Activated CD4-positive, alpha-beta T cell treated with anti-CD3 and anti-CD28 coated beads, Interleukin-2, amount 10 ng/mL, durations not matched to agents 7 days and 5 days (primary cell): ENCODE measurements at regions of chr3 and their contacts with region 1.

Region 1: GRCh38 chr3:69306239-69307185 is 79.4 kb downstream of the FRMD4B start:
- DNase-seq: peak; percentile 79
- H3K4me3 Mint-ChIP-seq: no peak overlapping the region
- H3K27ac Mint-ChIP-seq: peak overlapping the region; percentile 47
- H3K4me1 Mint-ChIP-seq: peaks cover 6% of the 10 kb centered on the region
- H3K27me3 Mint-ChIP-seq: no peaks in the 10 kb centered on the region

Region 2: DNA sequence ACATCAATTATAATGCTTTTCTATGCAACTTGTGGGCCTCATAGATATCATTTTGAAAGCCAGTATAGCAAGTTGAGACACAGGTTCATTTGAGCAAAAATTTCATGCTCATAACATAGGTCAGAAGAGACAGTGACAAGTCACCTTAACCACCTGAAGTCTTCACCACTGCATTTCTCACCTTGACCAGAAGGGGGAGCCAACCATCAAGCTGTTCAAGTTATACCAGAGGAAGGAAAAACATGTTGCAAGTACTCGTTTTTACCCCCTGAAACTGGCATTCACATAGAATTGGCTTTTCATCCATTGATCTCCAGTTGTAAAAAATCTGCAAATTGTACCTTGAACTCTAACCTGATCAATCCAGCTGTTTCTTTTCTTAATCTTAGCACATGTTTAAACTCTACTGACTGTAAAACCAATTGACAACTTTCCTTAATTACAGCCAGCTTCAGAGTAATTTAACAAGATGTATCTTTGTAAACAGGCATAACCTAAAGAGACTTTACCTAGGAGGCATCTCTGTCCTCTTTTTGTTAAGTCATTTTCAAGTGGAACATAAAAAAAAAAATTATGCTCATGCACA is 185.5 kb before region 1 on chr3:
- CTCF ChIA-PET with region 1: interaction called, 11 read pairs
- POLR2A ChIA-PET with region 1: no interaction called
- DNase-seq: peak; percentile 87
- H3K4me3 Mint-ChIP-seq: no peak overlapping the region
- H3K27ac Mint-ChIP-seq: no peak overlapping the region
- H3K4me1 Mint-ChIP-seq: peaks cover 5% of the 10 kb centered on the region
- H3K27me3 Mint-ChIP-seq: no peaks in the 10 kb centered on the region

Region 3: GRCh38 chr3:69161587-69162307 is 144.8 kb before region 1 on chr3:
- CTCF ChIA-PET with region 1: interaction called, 88 read pairs
- POLR2A ChIA-PET with region 1: interaction called, 4 read pairs
- DNase-seq: peak; percentile 50
- H3K4me3 Mint-ChIP-seq: no peak overlapping the region
- H3K27ac Mint-ChIP-seq: no peak overlapping the region
- H3K4me1 Mint-ChIP-seq: peaks cover 7% of the 10 kb centered on the region
- H3K27me3 Mint-ChIP-seq: no peaks in the 10 kb centered on the region

Region 4: GRCh38 chr3:69236812-69237707 is 69.5 kb before region 1 on chr3:
- CTCF ChIA-PET with region 1: interaction called, 12 read pairs
- POLR2A ChIA-PET with region 1: no interaction called
- DNase-seq: no peak
- H3K4me3 Mint-ChIP-seq: peak overlapping the region; percentile 12
- H3K27ac Mint-ChIP-seq: no peak overlapping the region
- H3K4me1 Mint-ChIP-seq: peaks cover 16% of the 10 kb centered on the region
- H3K27me3 Mint-ChIP-seq: no peaks in the 10 kb centered on the region

Region 5: GRCh38 chr3:69294014-69294775 is 12.3 kb before region 1 on chr3:
- CTCF ChIA-PET with region 1: interaction called, 18 read pairs
- POLR2A ChIA-PET with region 1: no interaction called
- DNase-seq: no peak
- H3K4me3 Mint-ChIP-seq: no peak overlapping the region
- H3K27ac Mint-ChIP-seq: no peak overlapping the region
- H3K4me1 Mint-ChIP-seq: peaks cover 1% of the 10 kb centered on the region
- H3K27me3 Mint-ChIP-seq: no peaks in the 10 kb centered on the region

Region 6: DNA sequence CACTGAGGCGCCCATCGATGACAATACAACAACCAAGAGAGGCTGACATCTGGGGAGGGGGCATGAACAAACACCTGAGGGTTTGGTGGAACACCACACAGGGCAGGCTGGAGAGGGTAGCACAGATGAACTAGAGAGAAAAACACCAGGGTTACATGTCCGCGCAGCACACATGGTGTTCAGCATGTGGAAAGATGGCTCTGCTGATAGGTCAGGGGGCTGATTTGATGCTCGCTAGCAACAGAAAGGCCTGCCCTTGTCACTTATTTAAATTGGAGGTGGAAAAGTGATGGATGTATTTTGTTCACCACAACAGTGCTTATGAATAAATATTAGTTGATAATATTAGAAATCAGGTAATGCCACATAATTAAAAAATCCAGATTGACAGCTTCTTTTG is 11.9 kb after region 1 on chr3:
- CTCF ChIA-PET with region 1: interaction called, 21 read pairs
- POLR2A ChIA-PET with region 1: no interaction called
- DNase-seq: no peak
- H3K4me3 Mint-ChIP-seq: no peak overlapping the region
- H3K27ac Mint-ChIP-seq: no peak overlapping the region
- H3K4me1 Mint-ChIP-seq: no peaks in the 10 kb centered on the region
- H3K27me3 Mint-ChIP-seq: no peaks in the 10 kb centered on the region

Region 7: DNA sequence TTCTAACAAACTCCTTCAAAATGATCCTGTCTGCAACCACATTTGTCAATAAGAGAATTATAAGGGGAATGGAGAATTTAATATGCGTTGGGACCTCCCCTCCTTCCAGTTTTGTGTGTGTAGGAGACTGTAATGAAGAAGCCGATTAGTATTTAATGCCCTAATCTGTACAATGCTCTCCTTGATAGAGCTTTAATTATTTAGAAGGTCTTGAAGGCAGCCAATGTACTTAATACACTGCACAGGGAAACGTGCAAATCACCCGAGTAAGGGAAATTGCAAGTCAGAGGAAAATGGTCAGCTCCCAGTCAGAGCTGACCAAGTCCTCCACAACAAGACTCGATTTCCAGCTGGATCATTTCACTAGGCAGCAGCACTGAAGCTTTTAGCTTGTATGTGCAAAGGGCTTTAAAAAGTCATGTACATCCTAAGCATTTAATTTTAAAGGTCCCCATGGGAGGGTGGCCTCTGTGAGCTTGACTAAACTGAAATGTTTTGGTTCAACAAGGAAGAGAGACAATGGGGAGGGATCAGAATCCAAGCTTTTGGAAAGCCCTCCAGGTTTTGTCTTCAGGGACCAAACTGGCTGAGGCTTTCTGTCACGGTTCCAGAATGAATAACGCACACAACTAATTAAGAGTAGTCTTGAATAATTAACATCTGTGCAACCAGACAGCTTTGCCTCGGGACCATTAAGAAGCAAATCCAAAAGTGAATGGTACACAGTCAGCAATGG is 273.0 kb after region 1 on chr3:
- CTCF ChIA-PET with region 1: no interaction called
- POLR2A ChIA-PET with region 1: no interaction called
- DNase-seq: no peak
- H3K4me3 Mint-ChIP-seq: no peak overlapping the region
- H3K27ac Mint-ChIP-seq: no peak overlapping the region
- H3K4me1 Mint-ChIP-seq: no peaks in the 10 kb centered on the region
- H3K27me3 Mint-ChIP-seq: no peaks in the 10 kb centered on the region